Panc1 (cell line): ENCODE measurements at regions of chr4 and their contacts with region 1.

Region 1: GRCh38 chr4:37648096-37648817 is 37.9 kb downstream of the RELL1 start:
- DNase-seq: peak; percentile 82
- ATAC-seq: peak; percentile 99
- H3K4me3 ChIP-seq: peak overlapping the region in 1 of 2 experiments; percentile 23; a peak in 1 of 4 replicates
- H3K27ac ChIP-seq: peak overlapping the region; percentile 48; the same call in 1 of the 2 replicates
- H3K4me1 ChIP-seq: peaks cover 31% of the 10 kb centered on the region
- H3K27me3 ChIP-seq: no peaks in the 10 kb centered on the region
- CTCF ChIP-seq: no peak

Region 2: GRCh38 chr4:36618102-36618501 is 1030.2 kb before region 1 on chr4:
- CTCF ChIA-PET with region 1: no interaction called
- POLR2A ChIA-PET with region 1: no interaction called
- in situ Hi-C with region 1: no loop called
- intact Hi-C with region 1: no loop called
- DNase-seq: no peak
- ATAC-seq: no peak
- H3K4me3 ChIP-seq: no peak overlapping the region
- H3K27ac ChIP-seq: no peak overlapping the region
- H3K4me1 ChIP-seq: no peaks in the 10 kb centered on the region
- H3K27me3 ChIP-seq: no peaks in the 10 kb centered on the region
- CTCF ChIP-seq: no peak

Region 3: GRCh38 chr4:37802068-37802666 is 153.9 kb after region 1 on chr4:
- CTCF ChIA-PET with region 1: no interaction called
- POLR2A ChIA-PET with region 1: no interaction called
- in situ Hi-C with region 1: no loop called
- intact Hi-C with region 1: no loop called
- DNase-seq: peak; percentile 48
- ATAC-seq: peak; percentile 98
- H3K4me3 ChIP-seq: no peak overlapping the region
- H3K27ac ChIP-seq: no peak overlapping the region
- H3K4me1 ChIP-seq: no peaks in the 10 kb centered on the region
- H3K27me3 ChIP-seq: no peaks in the 10 kb centered on the region
- CTCF ChIP-seq: peak; percentile 80

Region 4: GRCh38 chr4:38681281-38681991 is 1033.2 kb after region 1 on chr4:
- CTCF ChIA-PET with region 1: no interaction called
- POLR2A ChIA-PET with region 1: interaction called, 12 read pairs
- in situ Hi-C with region 1: no loop called
- intact Hi-C with region 1: no loop called
- DNase-seq: no peak
- ATAC-seq: no peak
- H3K4me3 ChIP-seq: no peak overlapping the region
- H3K27ac ChIP-seq: no peak overlapping the region
- H3K4me1 ChIP-seq: no peaks in the 10 kb centered on the region
- H3K27me3 ChIP-seq: no peaks in the 10 kb centered on the region
- CTCF ChIP-seq: no peak